ENCODE measurements at regions of chr13 and their contacts with region 1.

Region 1: GRCh38 chr13:57629821-57630235 is 1.7 kb upstream of the PCDH17 start:
- DNase-seq: peak; percentile 77 to 99 (median 99)
- H3K4me3 ChIP-seq: peak overlapping the region; percentile 50 to 87 (median 72)
- H3K27ac ChIP-seq: peak overlapping the region in 57 of 59 donors; percentile 73 to 96 (median 93)
- H3K27me3 ChIP-seq: peaks cover 0 to 18% (median 0%) of the 10 kb centered on the region in 45 donors
- CTCF ChIP-seq: peak in 15 of 56 donors; percentile 1 to 41 (median 6)

Region 2: DNA sequence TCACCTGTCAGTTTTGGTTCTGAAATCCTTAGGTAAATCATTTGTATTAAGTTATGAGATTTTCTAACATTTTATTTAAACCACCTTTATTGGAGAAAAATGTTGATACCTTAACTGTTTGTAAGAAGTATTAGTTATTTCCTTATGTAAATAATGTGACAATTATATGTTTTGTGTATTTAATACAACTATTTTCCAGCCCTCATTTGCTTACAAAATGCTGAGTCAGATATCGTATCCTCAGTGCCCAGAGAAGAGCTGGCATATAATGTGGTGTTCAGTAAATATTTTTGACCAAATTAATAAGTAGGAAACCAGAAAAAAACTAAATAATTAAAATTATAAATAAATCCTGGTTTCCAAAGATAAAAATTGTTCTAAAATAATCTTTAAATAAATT is 138.5 kb before region 1 on chr13:
- intact Hi-C with region 1: no loop called
- DNase-seq: no peak
- H3K4me3 ChIP-seq: no peak overlapping the region
- H3K27ac ChIP-seq: no peak overlapping the region
- H3K27me3 ChIP-seq: no peaks in the 10 kb centered on the region
- CTCF ChIP-seq: no peak

Region 3: GRCh38 chr13:57698851-57699250 is 69.0 kb after region 1 on chr13:
- intact Hi-C with region 1: loop called in 1 of 2 experiments (anchors 5 kb)
- DNase-seq: no peak
- H3K4me3 ChIP-seq: peak overlapping the region in 42 of 59 donors; percentile 1 to 51 (median 22)
- H3K27ac ChIP-seq: peak overlapping the region in 27 of 59 donors; percentile 1 to 68 (median 38)
- H3K27me3 ChIP-seq: no peaks in the 10 kb centered on the region
- CTCF ChIP-seq: no peak

Region 4: DNA sequence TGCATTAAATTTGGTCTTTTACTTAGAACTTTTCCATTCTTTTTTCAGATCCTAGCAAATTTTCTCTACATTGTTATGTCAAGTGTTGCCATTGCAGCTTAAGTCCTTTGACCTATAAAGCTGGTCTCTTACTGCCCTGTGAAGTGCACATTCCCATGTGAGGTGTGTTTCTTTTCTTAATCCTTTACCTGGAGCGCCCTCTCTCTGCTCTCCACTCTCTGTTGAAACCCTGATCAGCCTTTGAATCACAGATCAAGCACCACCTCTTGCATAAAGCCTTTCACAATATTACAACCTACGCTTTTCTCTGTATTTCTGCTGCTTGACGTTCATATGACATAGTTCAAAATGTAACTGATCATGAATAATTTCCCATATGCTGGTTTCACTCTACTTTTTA is 86.5 kb after region 1 on chr13:
- intact Hi-C with region 1: loop called in 1 of 2 experiments (anchors 5 kb)
- DNase-seq: no peak
- H3K4me3 ChIP-seq: no peak overlapping the region
- H3K27ac ChIP-seq: no peak overlapping the region
- H3K27me3 ChIP-seq: no peaks in the 10 kb centered on the region
- CTCF ChIP-seq: peak in 24 of 56 donors; percentile 7 to 53 (median 26)

Region 5: DNA sequence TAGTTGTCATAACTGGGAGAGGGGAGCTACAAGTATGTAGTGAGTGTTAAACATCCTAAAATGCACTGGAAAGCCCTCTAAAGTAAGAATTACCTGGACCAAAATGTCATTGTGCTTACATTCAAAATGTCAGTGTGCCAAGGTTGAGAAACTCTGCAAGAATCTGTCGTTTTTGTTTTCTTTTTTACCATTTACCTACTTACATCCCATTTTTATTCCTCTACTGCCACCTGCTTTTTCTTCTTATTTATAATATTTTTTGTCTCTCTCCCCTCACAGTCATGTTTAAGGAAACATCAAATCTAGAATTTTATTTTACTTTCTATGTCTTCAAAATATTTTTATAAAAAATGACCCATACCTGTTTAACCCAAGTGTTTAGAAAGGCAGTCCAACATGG is 228.1 kb after region 1 on chr13:
- intact Hi-C with region 1: loop called (anchors 2 kb)
- DNase-seq: no peak
- H3K4me3 ChIP-seq: peak overlapping the region in 11 of 59 donors; percentile 0 to 40 (median 26)
- H3K27ac ChIP-seq: no peak overlapping the region
- H3K27me3 ChIP-seq: no peaks in the 10 kb centered on the region
- CTCF ChIP-seq: peak in 53 of 56 donors; percentile 28 to 77 (median 55)

Region 6: GRCh38 chr13:58207501-58207900 is 577.7 kb after region 1 on chr13:
- intact Hi-C with region 1: no loop called
- DNase-seq: no peak
- H3K4me3 ChIP-seq: no peak overlapping the region
- H3K27ac ChIP-seq: no peak overlapping the region
- H3K27me3 ChIP-seq: no peaks in the 10 kb centered on the region
- CTCF ChIP-seq: no peak